GM10248 (cell line): ENCODE measurements at regions of chr22 and their contacts with region 1.

Region 1: GRCh38 chr22:22587577-22588188 is 28.6 kb upstream of the PRAME start:
- DNase-seq: no peak
- CTCF ChIP-seq: no peak

Region 2: DNA sequence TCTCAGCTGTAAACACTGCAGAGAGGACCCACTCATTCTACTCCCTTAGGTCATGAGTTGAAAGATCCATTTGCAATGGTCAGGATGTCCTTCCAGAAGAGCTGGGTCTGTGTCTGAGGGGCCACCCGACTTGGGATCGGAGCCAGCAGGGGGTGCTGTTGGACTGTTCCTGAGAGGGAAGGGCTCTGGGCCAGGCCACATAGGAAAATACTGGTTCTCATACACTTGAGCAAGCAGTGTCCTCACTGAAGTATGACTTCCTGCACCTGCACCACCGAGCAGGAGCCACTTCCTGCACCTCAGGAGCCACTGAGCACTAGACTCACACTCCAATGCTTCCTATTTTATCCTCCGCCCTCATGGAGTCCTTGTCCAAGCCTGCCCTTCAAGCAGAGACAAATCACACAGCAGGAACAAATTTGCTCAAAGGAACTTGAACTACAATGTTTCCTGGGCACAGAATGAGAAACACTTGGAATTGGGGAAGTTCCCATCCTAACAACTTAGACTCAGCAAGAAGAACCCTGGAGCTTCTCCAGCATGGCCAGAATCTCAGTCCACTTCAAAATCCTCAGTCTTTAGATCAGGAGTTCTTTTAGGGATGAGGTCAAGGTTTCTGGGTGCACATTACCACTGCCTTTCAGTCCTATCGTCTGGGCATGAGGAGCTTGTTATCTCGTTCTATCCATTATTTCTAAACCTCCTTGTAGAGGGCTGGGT is 379.7 kb before region 1 on chr22:
- CTCF ChIA-PET with region 1: no interaction called
- POLR2A ChIA-PET with region 1: no interaction called
- DNase-seq: peak; percentile 84
- CTCF ChIP-seq: peak; percentile 78

Region 3: DNA sequence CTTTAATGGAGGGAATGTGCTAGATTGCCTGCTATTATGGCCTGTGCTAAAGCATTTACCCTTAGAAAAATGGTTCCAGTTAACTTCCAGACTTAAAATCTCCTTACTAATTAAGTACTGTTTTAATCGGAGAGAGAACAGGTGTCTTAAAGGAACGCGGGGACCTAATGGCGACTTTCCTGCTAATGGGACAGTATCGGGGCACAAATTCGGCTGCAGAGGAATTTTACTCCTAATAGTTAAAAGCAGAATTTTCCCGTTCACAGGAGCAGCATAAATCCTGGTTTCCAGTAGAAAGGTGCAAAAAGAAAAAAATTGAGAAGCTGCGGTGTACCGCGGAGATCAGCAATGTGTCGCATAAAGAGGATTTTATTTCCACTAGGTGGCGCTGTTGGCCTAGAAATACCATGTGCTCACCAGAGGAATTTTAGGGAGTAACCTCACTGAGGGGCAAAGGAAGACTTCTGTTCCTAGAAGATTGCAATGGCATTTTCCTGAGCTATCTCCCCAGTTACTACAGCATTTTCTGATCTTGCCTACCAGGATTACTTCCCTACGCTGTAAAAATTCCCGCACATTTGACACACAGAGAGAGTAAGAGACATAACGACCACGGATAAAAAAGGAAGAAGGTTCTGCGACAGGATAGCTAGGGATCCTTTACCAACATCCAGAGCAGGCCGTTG is 123.7 kb before region 1 on chr22:
- CTCF ChIA-PET with region 1: interaction called, 42 read pairs
- POLR2A ChIA-PET with region 1: no interaction called
- DNase-seq: peak; percentile 58
- CTCF ChIP-seq: peak; percentile 60

Region 4: GRCh38 chr22:22605074-22605404 is 17.4 kb after region 1 on chr22:
- CTCF ChIA-PET with region 1: interaction called, 14 read pairs
- POLR2A ChIA-PET with region 1: no interaction called
- DNase-seq: peak; percentile 47
- CTCF ChIP-seq: no peak

Region 5: DNA sequence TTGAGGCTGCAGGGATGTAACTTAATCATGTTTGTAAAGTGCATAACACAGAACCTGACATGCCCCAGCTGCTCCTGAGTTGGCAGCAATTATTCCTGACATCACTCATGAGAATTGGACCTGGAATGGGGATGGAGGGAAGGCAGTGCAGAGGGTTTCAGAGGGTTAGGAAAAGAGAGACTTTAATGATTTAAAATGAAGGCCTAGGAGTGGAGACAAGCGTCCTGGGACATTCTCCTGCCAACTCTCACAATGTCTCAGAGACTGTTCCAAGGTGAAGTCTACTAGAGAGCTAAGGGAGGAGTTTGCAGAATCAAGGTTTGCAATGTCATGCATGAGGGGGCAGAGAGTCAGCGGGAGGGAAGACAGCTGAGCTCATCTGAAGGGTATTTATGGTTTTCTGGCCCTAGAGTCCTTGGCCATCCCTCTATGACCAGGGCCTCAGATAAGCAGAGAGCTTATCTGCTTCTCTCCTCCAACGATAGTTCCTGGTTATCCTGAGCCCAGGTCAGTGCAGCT is 93.6 kb after region 1 on chr22:
- CTCF ChIA-PET with region 1: interaction called, 21 read pairs
- POLR2A ChIA-PET with region 1: no interaction called
- DNase-seq: no peak
- CTCF ChIP-seq: no peak

Region 6: DNA sequence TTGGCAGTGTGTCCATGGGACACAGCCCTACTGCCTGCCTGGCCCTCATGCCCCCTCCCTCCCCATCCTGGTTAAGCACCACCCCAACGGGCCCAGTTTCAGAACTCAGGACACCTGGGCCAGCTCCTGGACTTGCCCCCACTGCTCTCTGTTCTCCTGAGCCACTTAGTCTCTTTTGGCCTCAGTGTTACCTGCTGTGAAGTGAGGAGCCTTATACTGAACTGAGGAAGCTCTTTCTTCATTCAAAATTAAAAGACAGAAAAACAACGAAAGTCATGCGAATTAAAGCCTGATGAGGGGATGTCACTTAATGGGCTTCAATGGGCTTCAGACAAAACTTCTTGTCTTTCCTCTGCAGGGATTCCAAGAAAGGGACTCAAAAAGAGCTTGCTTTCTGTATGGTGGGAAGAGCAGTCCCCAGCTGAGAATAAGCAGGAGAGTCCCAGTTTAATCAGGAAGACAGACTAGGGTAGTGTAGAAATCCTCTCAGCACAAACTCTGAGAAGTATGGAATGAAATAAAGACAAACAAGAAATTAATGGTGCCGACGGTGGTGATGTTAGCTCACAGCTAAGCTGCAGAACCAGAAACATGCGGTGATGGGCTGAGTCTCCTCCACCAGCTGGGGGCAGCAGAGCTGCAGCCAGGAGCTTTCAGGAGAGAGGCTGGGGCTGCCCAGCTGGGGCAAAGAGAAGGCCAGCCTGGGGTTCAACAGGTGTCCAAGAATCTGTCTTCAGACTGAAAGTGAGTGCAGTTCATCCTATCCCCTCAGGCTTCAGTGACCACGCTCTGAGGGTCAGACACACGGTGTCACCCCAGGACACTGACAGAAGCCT is 157.8 kb after region 1 on chr22:
- CTCF ChIA-PET with region 1: interaction called, 10 read pairs
- POLR2A ChIA-PET with region 1: no interaction called
- DNase-seq: peak; percentile 54
- CTCF ChIP-seq: peak; percentile 83